AG04449 (cell line): ENCODE measurements at regions of chr11 and their contacts with region 1.

Region 1: GRCh38 chr11:128157423-128158298 is 429.7 kb downstream of the ETS1 start:
- DNase-seq: no peak
- H3K4me3 ChIP-seq: peak overlapping the region; percentile 41
- CTCF ChIP-seq: peak; percentile 75

Region 2: GRCh38 chr11:128026596-128026995 is 131.1 kb before region 1 on chr11:
- CTCF ChIA-PET with region 1: interaction called, 98 read pairs
- POLR2A ChIA-PET with region 1: no interaction called
- DNase-seq: peak; percentile 89
- H3K4me3 ChIP-seq: no peak overlapping the region
- CTCF ChIP-seq: no peak

Region 3: DNA sequence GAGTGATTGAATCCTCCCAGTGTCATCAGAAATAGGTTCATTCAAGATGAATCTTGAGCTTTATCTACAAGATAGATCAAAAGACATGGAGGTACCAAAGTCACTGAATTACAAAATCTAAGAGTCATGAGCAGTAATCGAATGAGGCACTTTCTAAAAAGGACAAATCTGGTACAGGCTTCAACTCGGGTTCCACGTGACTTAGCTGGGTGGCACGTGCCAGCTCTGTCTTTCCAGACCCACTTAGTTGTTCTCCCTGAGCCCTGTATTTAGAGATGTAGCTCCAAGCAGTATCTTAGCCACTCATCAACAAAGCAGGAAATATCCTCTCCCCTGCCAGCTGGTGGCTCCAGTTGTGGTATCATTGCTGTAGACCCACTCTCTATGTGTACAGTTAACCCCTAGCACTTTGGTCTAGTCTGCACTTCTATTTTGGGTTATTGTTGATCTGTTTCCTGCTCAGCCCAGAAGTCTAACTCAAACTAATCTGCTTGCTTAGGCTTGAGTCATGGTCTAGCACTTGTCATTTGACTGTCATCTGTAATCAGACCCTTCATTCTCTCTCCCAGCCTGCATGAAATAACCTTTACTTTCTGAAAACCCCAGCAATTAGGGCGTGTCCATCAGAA is 99.0 kb before region 1 on chr11:
- CTCF ChIA-PET with region 1: interaction called, 38 read pairs
- POLR2A ChIA-PET with region 1: no interaction called
- DNase-seq: no peak
- H3K4me3 ChIP-seq: no peak overlapping the region
- CTCF ChIP-seq: no peak

Region 4: GRCh38 chr11:128180446-128181087 is 22.9 kb after region 1 on chr11:
- CTCF ChIA-PET with region 1: interaction called, 216 read pairs
- POLR2A ChIA-PET with region 1: no interaction called
- DNase-seq: peak; percentile 72
- H3K4me3 ChIP-seq: no peak overlapping the region
- CTCF ChIP-seq: no peak

Region 5: DNA sequence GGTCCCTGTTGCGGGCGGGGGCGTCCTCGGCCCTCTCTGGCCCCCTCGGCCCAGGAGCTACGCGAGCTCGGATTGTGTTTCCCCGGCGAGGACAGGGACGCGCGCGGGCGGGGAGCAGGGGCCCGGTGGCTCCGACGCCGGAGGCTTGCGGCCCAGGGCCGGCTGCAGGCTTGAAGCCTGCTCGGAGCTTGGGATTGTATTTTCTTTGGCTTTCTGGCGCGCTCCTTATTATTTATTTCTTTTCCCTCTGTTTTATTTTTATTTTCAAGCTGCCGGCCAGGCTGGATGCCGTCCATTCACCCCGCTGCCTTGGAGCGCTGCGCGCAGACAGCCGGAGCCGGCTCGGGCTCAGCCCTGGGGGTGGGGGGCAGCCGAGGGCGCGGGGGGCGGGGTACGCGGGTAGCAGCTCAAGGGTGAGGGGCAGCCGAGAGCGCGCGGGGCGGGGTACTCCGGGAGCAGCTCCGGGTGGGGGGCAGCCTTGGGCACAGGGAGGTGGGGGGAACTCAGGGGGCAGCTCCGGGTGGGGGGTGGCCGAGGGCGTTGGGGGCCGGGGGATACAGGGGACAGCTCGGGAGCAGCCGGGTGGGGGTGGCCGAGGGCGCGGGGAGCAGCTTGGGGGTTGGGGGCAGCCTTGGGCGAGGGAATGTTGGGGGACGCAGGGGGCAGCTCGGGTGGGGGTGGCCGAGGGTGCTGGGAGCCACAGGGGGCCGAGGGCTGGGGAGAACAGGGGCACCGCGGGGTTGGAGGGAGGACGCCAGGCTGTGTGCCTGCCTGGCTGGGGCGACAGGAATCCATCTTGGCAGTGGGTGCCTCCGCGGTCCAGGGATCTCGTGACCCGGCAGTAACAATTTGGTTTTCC is 666.8 kb after region 1 on chr11:
- CTCF ChIA-PET with region 1: interaction called, 116 read pairs
- POLR2A ChIA-PET with region 1: no interaction called
- DNase-seq: no peak
- H3K4me3 ChIP-seq: no peak overlapping the region
- CTCF ChIP-seq: no peak

Region 6: GRCh38 chr11:128859563-128860441 is 702.1 kb after region 1 on chr11:
- CTCF ChIA-PET with region 1: interaction called, 19 read pairs
- POLR2A ChIA-PET with region 1: no interaction called
- DNase-seq: no peak
- H3K4me3 ChIP-seq: no peak overlapping the region
- CTCF ChIP-seq: peak; percentile 73

Region 7: GRCh38 chr11:128917144-128917724 is 759.6 kb after region 1 on chr11:
- CTCF ChIA-PET with region 1: no interaction called
- POLR2A ChIA-PET with region 1: no interaction called
- DNase-seq: no peak
- H3K4me3 ChIP-seq: no peak overlapping the region
- CTCF ChIP-seq: no peak